ENCODE measurements at regions of chr2 and their contacts with region 1.

Region 1: GRCh38 chr2:158968396-158969161 is at the start of gene TANC1:
- DNase-seq: peak; percentile 92
- H3K4me3 Mint-ChIP-seq: peak within 1 kb of the TSS; percentile 90
- H3K27ac Mint-ChIP-seq: peak within 1 kb of the TSS; percentile 90
- H3K4me1 Mint-ChIP-seq: peaks cover 36% of the 10 kb centered on the region
- H3K27me3 Mint-ChIP-seq: no peaks in the 10 kb centered on the region
- CTCF ChIP-seq: no peak
- total RNA-seq, gene TANC1: 31.0 and 35.3 TPM in 2 replicates

Region 2: DNA sequence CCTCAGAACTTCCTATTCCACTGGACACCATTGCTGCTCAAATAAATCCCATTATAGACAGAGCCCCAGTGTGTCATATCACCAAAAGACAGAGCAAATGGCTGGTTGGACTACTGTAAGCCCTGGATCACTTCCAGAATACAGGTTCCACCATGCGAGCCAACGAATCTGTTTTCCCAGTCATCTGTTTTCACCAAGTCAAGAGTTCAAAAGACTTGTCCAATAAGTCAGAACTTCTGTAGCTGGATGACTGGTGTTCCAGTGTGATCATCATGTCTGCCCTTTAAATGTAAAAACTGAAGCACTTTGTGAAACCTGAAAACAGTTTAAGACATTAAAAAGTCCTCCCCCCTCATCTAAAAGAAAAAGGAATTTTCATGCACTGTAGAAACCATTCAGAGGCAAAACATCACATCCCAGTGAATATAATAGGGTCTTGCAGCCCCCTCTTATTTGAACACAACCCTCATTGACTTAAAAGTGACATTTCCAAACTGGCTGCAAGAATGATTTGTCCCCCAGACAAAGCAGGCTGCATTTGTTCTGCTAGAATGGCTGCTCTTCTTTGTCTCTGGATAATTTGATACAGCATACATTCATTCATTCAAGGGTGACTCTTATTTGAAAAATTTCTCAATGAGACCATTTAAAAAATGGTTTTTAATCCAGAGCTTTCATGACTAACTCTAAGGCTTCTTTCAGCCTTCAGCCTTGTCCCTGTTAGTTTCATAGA is 64.7 kb before region 1 on chr2:
- CTCF ChIA-PET with region 1: interaction called, 5 read pairs
- POLR2A ChIA-PET with region 1: interaction called, 23 read pairs
- intact Hi-C with region 1: loop called (anchors 1 kb)
- DNase-seq: no peak
- H3K4me3 Mint-ChIP-seq: no peak overlapping the region
- H3K27ac Mint-ChIP-seq: no peak overlapping the region
- H3K4me1 Mint-ChIP-seq: no peaks in the 10 kb centered on the region
- H3K27me3 Mint-ChIP-seq: no peaks in the 10 kb centered on the region
- CTCF ChIP-seq: no peak

Region 3: GRCh38 chr2:158936978-158937377 is 31.6 kb before region 1 on chr2:
- CTCF ChIA-PET with region 1: interaction called, 3 read pairs
- POLR2A ChIA-PET with region 1: interaction called, 32 read pairs
- intact Hi-C with region 1: no loop called
- DNase-seq: peak; percentile 87
- H3K4me3 Mint-ChIP-seq: no peak overlapping the region
- H3K27ac Mint-ChIP-seq: peak overlapping the region; percentile 93
- H3K4me1 Mint-ChIP-seq: peaks cover 9% of the 10 kb centered on the region
- H3K27me3 Mint-ChIP-seq: no peaks in the 10 kb centered on the region
- CTCF ChIP-seq: no peak

Region 4: DNA sequence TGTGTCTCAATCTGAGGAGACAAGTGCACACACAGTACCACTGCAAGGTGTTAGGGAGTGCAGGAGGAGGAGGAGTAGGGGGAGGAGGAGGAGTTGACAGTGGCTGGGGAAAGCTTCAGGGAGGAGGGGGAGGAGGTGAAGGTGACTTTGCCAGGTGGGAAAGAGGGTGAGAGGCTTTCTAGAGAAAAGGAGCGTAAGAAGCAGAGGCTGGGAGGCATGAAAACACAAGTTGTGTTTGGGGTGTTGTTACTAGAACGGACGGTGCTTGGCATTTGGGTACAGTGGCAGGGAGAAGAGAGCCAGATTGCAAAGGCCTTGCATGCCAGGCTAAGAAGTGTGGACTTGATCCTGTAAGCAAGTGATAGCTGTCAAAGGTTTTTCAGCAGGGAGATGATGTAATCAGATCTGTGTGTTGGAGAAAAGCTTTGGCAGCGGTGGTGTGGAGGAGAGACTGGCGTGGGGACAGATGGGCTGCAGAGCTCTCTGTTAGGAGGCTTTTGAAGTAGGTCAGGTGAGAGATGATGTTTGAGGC is 16.1 kb after region 1 on chr2:
- CTCF ChIA-PET with region 1: interaction called, 5 read pairs
- POLR2A ChIA-PET with region 1: interaction called, 43 read pairs
- intact Hi-C with region 1: no loop called
- DNase-seq: peak; percentile 26
- H3K4me3 Mint-ChIP-seq: no peak overlapping the region
- H3K27ac Mint-ChIP-seq: peak overlapping the region; percentile 73
- H3K4me1 Mint-ChIP-seq: peaks cover 32% of the 10 kb centered on the region
- H3K27me3 Mint-ChIP-seq: no peaks in the 10 kb centered on the region
- CTCF ChIP-seq: no peak

Region 5: DNA sequence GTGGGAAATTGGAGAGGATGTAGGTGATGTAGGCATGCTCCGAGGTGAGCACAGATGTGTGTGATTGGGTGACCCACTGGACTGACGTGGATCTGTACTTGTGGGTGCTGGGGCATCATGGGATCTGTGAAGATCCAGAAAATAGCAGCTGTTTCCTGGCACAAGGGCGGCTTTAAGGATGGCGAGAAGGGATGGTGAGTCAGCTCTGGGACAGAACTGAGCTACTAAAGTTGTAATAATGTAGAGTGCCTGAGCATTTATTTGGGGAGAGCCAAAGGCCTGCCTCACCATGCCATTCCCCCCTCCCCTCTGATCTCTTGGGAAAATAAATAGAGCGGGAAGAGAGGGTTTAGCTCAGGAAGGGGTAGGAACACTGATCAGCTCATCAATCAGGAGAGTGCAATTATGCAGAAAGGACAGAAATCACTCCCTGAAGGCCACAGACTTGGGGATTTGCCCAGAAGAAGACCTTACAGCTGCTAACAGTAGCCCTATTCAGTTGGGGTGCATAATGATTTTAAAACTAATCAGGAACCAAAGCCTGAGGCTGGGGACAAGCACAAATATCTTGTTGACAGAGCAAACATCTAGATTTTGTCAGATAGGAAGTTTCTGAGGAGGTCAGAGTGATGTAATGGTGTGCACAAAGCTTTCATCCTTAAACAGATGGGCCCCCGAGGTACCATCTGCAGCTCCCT is 30.1 kb after region 1 on chr2:
- CTCF ChIA-PET with region 1: interaction called, 7 read pairs
- POLR2A ChIA-PET with region 1: interaction called, 34 read pairs
- intact Hi-C with region 1: no loop called
- DNase-seq: peak; percentile 70
- H3K4me3 Mint-ChIP-seq: peak overlapping the region; percentile 28
- H3K27ac Mint-ChIP-seq: peak overlapping the region; percentile 83
- H3K4me1 Mint-ChIP-seq: peaks cover 18% of the 10 kb centered on the region
- H3K27me3 Mint-ChIP-seq: no peaks in the 10 kb centered on the region
- CTCF ChIP-seq: no peak

Region 6: DNA sequence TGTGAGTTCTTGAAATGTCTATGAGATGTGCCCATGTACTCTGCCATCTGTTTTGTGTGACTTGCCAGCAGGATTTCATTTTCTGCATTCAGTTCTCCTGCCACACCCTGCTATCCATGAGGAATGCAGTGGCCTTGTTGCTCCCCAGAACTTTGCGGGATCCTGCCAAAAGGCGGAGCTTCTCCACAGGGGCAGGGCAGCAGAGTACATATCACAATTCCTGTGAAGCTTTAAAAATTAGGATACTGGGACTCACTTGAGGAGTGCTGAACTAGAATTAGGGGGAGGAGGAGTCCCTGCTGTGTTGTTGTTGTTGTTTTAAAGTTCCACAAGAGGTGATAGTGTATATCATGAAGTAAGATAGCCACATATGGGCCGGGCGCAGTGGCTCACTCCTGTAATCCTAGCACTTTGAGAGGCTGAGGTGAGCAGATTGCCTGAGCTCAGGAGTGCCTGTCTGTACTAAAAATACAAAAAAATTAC is 76.3 kb after region 1 on chr2:
- CTCF ChIA-PET with region 1: no interaction called
- POLR2A ChIA-PET with region 1: interaction called, 11 read pairs
- intact Hi-C with region 1: no loop called
- DNase-seq: peak; percentile 72
- H3K4me3 Mint-ChIP-seq: peak overlapping the region; percentile 59
- H3K27ac Mint-ChIP-seq: peak overlapping the region; percentile 77
- H3K4me1 Mint-ChIP-seq: peaks cover 63% of the 10 kb centered on the region
- H3K27me3 Mint-ChIP-seq: no peaks in the 10 kb centered on the region
- CTCF ChIP-seq: no peak

Region 7: GRCh38 chr2:159168707-159169106 is 200.1 kb after region 1 on chr2:
- CTCF ChIA-PET with region 1: interaction called, 3 read pairs
- POLR2A ChIA-PET with region 1: no interaction called
- intact Hi-C with region 1: loop called (anchors 5 kb)
- DNase-seq: peak; percentile 58
- H3K4me3 Mint-ChIP-seq: no peak overlapping the region
- H3K27ac Mint-ChIP-seq: no peak overlapping the region
- H3K4me1 Mint-ChIP-seq: peaks cover 8% of the 10 kb centered on the region
- H3K27me3 Mint-ChIP-seq: no peaks in the 10 kb centered on the region
- CTCF ChIP-seq: peak; percentile 16